A673 (cell line): ENCODE measurements at regions of chr6 and their contacts with region 1.

Region 1: DNA sequence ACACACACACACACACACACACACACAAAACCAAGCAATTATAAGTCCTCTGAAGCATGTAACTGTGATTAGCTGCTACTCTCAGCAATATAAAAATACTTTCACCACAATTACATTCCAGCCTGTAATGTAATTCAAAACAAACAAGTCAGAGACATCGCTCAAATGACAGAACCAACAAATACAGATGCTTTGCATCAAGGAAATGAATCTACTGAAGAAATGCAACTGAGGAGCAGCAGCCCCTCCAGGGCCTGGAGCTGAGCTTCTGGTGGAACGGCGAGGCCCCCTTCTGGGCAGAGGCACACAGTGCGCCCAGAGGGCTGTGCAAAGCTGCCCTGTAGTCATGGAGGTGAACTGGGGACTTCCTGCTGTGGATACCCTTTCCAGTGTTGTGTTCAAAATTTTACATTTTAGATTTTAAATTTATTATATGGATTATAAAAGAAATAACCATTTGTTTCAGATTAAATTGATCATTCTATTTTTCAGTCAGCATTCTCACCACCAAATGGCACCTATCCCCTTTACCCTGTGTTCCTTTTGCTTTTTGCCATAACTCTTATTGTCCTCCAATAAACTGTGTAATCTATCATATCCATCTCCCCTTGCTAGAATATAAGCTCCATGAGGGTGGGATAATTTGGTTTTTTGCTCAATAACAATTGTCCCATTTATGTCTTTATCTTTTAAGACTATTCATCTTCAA is 23.2 kb downstream of the ADAT2 start:
- DNase-seq: peak; percentile 73
- H3K4me3 ChIP-seq: no peak overlapping the region
- H3K27ac ChIP-seq: no peak overlapping the region
- H3K4me1 ChIP-seq: no peaks in the 10 kb centered on the region
- H3K27me3 ChIP-seq: no peaks in the 10 kb centered on the region
- CTCF ChIP-seq: peak; percentile 94

Region 2: DNA sequence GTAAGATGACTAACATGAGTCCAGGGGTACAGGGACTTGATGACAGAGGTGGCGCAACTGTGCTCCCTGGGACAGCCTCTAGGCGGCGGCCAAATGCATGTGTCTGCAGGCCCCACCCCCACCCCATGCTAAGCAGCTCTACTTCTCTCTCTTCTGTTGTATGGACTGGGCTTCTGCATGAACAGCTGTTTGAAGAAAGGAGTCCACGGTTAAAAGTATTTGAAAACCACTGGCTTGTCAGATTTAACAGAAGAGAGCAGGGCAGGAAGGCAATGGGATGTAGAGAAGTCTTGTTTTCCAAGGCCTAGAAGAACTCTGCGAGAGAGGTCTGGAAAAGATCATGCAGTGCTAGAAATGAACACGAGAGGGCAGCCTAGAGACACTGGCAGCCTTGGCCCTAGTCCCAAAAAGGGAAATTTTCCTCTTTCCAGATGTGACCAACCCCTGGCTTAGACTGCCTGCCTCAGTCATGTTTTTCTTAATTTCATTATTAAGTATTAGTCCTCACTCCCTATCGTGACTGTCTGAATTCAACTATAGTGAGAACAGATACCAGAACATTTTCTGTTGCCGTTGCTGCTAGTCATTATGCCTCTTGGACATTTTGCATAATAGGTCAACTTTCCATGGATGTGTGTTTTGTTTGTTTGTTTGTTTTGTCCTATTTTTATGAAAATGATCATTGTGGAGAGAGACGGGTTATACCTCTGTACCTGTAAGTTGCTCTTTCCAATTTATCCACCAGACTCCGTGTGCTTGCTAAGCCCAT is 860.5 kb before region 1 on chr6:
- CTCF ChIA-PET with region 1: no interaction called
- POLR2A ChIA-PET with region 1: no interaction called
- intact Hi-C with region 1: loop called (anchors 2 kb)
- DNase-seq: peak; percentile 77
- H3K4me3 ChIP-seq: no peak overlapping the region
- H3K27ac ChIP-seq: no peak overlapping the region
- H3K4me1 ChIP-seq: no peaks in the 10 kb centered on the region
- H3K27me3 ChIP-seq: peaks cover 3% of the 10 kb centered on the region
- CTCF ChIP-seq: peak; percentile 90

Region 3: GRCh38 chr6:143232849-143233248 is 194.4 kb before region 1 on chr6:
- CTCF ChIA-PET with region 1: interaction called, 3 read pairs
- POLR2A ChIA-PET with region 1: no interaction called
- intact Hi-C with region 1: loop called (anchors 5 kb)
- DNase-seq: peak; percentile 42
- H3K4me3 ChIP-seq: no peak overlapping the region
- H3K27ac ChIP-seq: no peak overlapping the region
- H3K4me1 ChIP-seq: no peaks in the 10 kb centered on the region
- H3K27me3 ChIP-seq: no peaks in the 10 kb centered on the region
- CTCF ChIP-seq: peak; percentile 66

Region 4: DNA sequence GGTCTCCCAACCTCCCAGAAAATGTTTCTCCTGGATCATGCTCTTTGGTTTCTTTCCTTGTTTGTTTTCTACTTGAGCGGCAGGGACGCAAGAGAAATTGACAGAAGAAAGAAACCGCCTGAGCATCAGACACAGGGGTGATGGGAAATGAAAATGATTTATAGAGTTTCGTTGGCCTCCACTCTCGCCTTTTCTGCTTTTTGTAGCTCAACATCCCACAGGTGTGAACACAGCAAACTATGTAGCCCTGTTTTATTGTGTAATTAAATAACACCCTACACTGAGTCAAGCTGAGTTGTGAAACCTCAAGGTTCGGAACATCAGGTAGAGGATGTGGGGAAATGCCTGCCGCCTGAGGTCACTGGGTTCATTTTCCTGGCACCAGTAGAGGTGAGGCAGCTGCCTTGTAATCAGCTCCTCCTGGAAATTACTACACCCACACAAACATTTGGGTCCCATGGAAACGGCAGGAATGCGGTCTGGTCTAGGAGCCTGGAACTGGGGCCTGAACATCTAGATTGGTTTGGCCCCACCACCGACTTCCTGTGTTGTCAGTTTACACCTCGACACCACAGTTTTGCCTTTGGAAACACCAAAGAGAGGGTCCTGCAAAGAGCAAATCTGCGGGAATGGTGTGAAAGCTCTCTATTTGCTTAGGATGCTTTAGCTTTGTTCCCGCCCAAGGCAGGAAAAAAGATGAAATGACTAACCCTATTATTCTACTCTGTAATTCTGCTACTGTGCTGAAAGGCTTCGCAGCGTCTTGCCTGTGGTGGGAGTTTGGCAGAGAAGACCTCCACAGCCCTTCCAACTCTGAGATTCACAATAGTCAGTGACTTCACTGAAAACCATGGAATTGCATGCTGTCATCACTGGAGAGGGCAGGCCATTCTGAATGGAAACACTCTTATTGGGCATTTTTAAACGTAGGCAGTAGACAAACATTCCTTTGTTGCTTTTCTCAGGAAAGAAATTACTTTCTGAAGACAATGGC is 29.7 kb before region 1 on chr6:
- CTCF ChIA-PET with region 1: no interaction called
- POLR2A ChIA-PET with region 1: no interaction called
- intact Hi-C with region 1: no loop called
- DNase-seq: peak; percentile 5
- H3K4me3 ChIP-seq: no peak overlapping the region
- H3K27ac ChIP-seq: no peak overlapping the region
- H3K4me1 ChIP-seq: no peaks in the 10 kb centered on the region
- H3K27me3 ChIP-seq: no peaks in the 10 kb centered on the region
- CTCF ChIP-seq: no peak

Region 5: DNA sequence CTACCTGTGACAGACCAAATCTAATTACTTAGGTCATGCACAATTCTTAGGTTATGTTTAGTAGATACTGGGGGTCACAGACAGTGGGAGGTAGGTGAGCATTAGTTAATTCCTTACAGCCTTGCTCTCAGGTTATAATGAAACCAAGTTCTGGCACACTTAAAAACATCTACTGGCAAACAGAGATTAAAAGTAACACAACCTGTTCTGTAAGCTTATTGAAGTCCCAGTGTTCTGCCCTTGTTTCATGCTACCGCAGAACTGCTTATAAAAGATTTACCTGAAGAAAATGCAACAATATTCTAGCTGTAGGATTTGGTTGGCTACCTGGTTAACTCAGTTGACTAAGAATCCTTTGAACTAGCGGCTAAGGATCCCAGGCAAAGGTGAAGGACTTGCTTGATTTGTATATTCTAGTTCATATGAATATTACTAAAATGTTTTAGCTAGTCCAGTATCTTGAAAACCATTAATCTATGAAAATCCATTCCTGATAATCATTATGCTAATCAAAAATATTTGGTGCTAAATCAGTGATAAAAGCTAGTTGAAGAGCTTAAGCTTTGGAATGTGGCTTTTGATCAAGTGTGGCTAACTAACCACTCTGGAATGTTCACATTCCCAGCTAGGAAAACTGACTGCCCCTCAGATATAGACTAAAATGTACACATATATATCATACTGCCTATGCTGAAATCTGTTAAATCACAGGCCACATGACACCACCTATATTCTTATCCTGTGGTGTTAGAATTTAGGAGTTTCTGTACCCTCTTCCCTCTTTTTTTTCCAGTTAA is 30.5 kb after region 1 on chr6:
- CTCF ChIA-PET with region 1: no interaction called
- POLR2A ChIA-PET with region 1: no interaction called
- intact Hi-C with region 1: no loop called
- DNase-seq: no peak
- H3K4me3 ChIP-seq: no peak overlapping the region
- H3K27ac ChIP-seq: no peak overlapping the region
- H3K4me1 ChIP-seq: no peaks in the 10 kb centered on the region
- H3K27me3 ChIP-seq: no peaks in the 10 kb centered on the region
- CTCF ChIP-seq: no peak